ENCODE measurements at regions of chr2 and their contacts with region 1.

Region 1: GRCh38 chr2:110639972-110640371 is 37.9 kb downstream of the BUB1 start:
- DNase-seq: no peak
- H3K4me3 ChIP-seq: no peak overlapping the region
- H3K27ac ChIP-seq: no peak overlapping the region
- H3K4me1 ChIP-seq: no peaks in the 10 kb centered on the region
- H3K27me3 ChIP-seq: no peaks in the 10 kb centered on the region
- CTCF ChIP-seq: no peak
- EP300 ChIP-seq: no peak
- POLR2A ChIP-seq: no peak
- RAD21 ChIP-seq: no peak

Region 2: GRCh38 chr2:110650346-110650745 is 10.4 kb after region 1 on chr2:
- CTCF ChIA-PET with region 1: interaction called, 5 read pairs
- POLR2A ChIA-PET with region 1: interaction called, 25 read pairs
- DNase-seq: no peak
- H3K4me3 ChIP-seq: no peak overlapping the region
- H3K27ac ChIP-seq: no peak overlapping the region
- H3K4me1 ChIP-seq: no peaks in the 10 kb centered on the region
- H3K27me3 ChIP-seq: no peaks in the 10 kb centered on the region
- CTCF ChIP-seq: no peak
- EP300 ChIP-seq: no peak
- POLR2A ChIP-seq: no peak
- RAD21 ChIP-seq: no peak